HepG2 (cell line): ENCODE measurements at regions of chr22 and their contacts with region 1.

Region 1: DNA sequence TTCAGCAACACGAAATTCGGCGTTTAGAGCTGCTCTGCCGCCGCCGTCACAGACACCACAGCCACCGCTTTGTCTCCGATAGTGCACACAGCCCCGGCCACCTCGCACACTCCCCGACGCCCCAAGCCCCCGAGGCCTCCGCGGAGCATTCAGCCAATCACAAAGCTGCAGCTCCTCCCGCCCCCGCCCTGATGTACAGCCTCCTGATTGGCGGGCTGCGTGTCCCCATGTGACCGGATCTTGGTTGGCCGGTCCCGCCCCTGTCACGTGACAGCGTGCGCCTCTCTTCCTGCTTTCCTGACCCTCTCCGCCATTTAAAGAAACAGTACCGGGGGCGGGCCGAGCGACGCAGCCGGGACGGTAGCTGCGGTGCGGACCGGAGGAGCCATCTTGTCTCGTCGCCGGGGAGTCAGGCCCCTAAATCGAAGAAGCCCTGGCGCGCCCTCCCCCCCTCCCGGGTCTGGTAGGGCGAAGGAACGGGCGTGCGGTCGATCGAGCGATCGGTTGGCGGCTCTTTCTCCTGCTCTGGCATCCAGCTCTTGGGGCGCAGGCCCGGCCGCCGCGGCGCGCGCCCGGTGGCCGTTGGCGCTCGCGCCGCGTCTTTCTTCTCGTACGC is at the start of gene TUG1:
- DNase-seq: peak; percentile 96
- ATAC-seq: peak; percentile 97
- H3K4me3 ChIP-seq: peak within 1 kb of the TSS; percentile 80 to 89 (median 88)
- H3K27ac ChIP-seq: peak within 1 kb of the TSS; percentile 84
- H3K4me1 ChIP-seq: peaks cover 69% of the 10 kb centered on the region
- H3K27me3 ChIP-seq: no peaks in the 10 kb centered on the region; a peak in 1 of 5 replicates
- CTCF ChIP-seq: no peak
- EP300 ChIP-seq: no peak
- POLR2A ChIP-seq: peak; percentile 89
- RAD21 ChIP-seq: peak; percentile 62
- total RNA-seq, gene TUG1: 32.8 and 35.2 TPM in 2 replicates

Region 2: DNA sequence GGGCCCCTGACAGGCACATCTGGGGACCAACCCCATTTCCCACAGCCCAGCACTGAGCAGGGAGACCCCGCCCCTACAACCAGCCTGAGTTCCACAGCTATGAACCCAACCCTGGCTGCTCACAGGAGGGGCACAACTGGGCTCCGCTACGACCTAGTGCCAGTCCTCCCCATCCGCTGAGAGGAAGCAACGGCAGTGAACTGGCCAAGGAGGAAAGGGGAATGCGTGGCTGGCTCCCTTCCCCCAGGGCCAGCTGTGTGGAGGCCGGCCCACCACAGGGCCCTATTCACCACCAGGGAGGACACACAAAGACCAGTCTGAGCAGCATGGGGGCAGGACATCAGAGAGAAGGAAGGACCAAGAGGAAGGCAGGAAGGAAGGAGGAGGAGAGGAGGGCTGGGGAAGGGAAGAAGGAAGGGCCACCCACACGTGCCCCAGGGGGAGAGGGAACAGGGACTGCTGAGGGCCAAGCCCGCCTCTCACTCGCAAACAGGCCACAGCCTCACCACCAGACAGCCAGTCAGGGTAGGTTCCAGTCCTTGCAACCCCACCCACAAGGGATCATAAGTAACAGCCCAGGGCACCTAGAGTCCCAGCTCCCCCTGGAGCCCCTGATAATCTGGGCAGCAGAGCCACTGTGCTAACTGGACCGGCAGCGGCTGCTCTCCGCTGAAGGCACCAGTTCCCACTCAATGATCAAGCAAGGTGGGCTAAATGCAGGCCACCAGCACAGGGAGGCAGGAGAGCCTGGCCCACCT is 386.1 kb before region 1 on chr22:
- CTCF ChIA-PET with region 1: no interaction called
- POLR2A ChIA-PET with region 1: no interaction called
- in situ Hi-C with region 1: no loop called
- intact Hi-C with region 1: no loop called
- DNase-seq: no peak
- ATAC-seq: no peak
- H3K4me3 ChIP-seq: no peak overlapping the region
- H3K27ac ChIP-seq: no peak overlapping the region
- H3K4me1 ChIP-seq: no peaks in the 10 kb centered on the region
- H3K27me3 ChIP-seq: no peaks in the 10 kb centered on the region
- CTCF ChIP-seq: no peak
- EP300 ChIP-seq: no peak
- POLR2A ChIP-seq: no peak
- RAD21 ChIP-seq: no peak

Region 3: GRCh38 chr22:31046539-31047226 is 77.7 kb after region 1 on chr22:
- CTCF ChIA-PET with region 1: no interaction called
- POLR2A ChIA-PET with region 1: interaction called, 18 read pairs
- in situ Hi-C with region 1: no loop called
- intact Hi-C with region 1: no loop called
- DNase-seq: peak; percentile 45
- ATAC-seq: peak; percentile 59; the same call in 2 of the 3 replicates
- H3K4me3 ChIP-seq: 0 out of 6 replicates have a peak overlapping the region, but pooled peaks of 1 of the 3 experiments have one; percentile 7
- H3K27ac ChIP-seq: peak overlapping the region; percentile 56
- H3K4me1 ChIP-seq: peaks cover 51% of the 10 kb centered on the region
- H3K27me3 ChIP-seq: no peaks in the 10 kb centered on the region
- CTCF ChIP-seq: no peak; the same call in 1 of the 2 replicates
- EP300 ChIP-seq: no peak; a peak in 1 of 4 replicates
- POLR2A ChIP-seq: no peak
- RAD21 ChIP-seq: no peak

Region 4: DNA sequence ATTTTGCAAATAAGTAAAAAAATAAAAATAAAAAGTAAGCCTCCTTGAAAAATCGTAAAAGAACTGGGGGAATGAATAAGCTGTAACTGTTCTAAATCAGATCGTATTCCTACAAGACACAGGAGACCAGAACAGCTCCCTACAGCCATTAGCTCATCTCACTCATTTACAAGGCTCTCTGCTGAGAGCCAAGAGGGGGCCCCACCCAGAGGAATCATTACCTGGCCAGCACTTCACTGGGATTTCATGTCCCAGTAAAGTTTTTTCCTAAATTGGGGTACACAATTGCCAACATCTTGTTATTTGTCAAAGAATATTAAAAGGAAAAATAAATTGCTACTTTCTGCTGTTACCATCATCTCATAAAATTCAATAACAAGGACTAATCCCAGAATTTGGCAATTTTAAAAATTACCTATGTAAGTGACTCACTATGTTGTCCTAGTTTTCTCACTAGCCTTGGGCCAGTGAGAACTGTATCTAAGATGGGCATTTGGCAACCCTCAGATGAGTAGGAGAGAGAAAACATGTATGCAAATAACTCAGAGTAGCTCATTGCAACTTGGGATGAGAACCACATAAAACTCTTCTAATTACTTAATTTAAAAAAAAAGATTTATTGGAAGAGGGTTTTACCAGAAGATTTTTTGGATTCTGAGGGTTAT is 93.7 kb after region 1 on chr22:
- CTCF ChIA-PET with region 1: no interaction called
- POLR2A ChIA-PET with region 1: interaction called, 35 read pairs
- in situ Hi-C with region 1: no loop called
- intact Hi-C with region 1: loop called (anchors 5 kb)
- DNase-seq: no peak
- ATAC-seq: no peak
- H3K4me3 ChIP-seq: no peak overlapping the region
- H3K27ac ChIP-seq: no peak overlapping the region
- H3K4me1 ChIP-seq: peaks cover 50% of the 10 kb centered on the region
- H3K27me3 ChIP-seq: no peaks in the 10 kb centered on the region
- CTCF ChIP-seq: no peak
- EP300 ChIP-seq: no peak
- POLR2A ChIP-seq: no peak
- RAD21 ChIP-seq: no peak

Region 5: DNA sequence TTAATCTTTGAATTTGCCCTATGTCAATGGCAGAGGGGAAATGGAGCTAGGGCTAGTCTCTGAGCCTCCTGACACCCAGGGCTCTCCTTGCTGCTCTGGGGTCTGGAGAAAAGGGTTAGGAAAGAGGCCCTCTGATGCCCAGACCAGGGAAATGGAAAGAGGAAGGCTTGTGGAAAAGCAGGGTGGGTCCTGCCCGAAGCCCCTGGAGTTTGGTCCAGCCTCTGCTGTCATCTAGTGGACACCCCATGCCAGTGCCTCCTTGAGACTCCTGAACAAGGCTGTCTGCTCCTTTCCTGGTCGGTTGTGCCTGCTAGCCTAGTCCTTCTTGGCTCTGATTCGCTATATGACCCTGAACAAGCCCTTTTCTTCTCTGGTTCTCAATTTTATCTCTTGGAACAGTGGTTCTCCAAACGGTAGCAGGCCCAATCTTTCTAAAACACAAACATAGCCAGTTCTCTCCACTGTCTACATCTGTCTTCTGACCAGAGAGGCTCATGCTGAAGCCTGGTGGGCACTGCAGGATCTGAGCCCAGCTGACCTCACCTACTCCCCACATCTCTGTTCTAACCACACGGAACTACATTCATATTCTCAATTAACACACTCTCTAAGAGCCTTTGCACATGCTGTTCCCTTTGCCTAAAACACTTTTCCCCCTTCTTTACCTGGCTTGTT is 180.1 kb after region 1 on chr22:
- CTCF ChIA-PET with region 1: no interaction called
- POLR2A ChIA-PET with region 1: interaction called, 3 read pairs
- in situ Hi-C with region 1: loop called (anchors 10 kb)
- intact Hi-C with region 1: no loop called
- DNase-seq: peak; percentile 64
- ATAC-seq: peak; percentile 90
- H3K4me3 ChIP-seq: no peak overlapping the region
- H3K27ac ChIP-seq: no peak overlapping the region
- H3K4me1 ChIP-seq: peaks cover 27% of the 10 kb centered on the region
- H3K27me3 ChIP-seq: peaks cover 2 to 5% of the 10 kb centered on the region in 2 experiments; a peak in 2 of 5 replicates
- CTCF ChIP-seq: peak; percentile 96
- EP300 ChIP-seq: no peak
- POLR2A ChIP-seq: no peak
- RAD21 ChIP-seq: peak; percentile 95

Region 6: GRCh38 chr22:31932863-31933262 is 963.8 kb after region 1 on chr22:
- CTCF ChIA-PET with region 1: no interaction called
- POLR2A ChIA-PET with region 1: no interaction called
- in situ Hi-C with region 1: no loop called
- intact Hi-C with region 1: no loop called
- DNase-seq: peak; percentile 34
- ATAC-seq: peak; percentile 41
- H3K4me3 ChIP-seq: no peak overlapping the region
- H3K27ac ChIP-seq: no peak overlapping the region
- H3K4me1 ChIP-seq: peaks cover 39% of the 10 kb centered on the region
- H3K27me3 ChIP-seq: peaks cover 0 to 16% of the 10 kb centered on the region in 2 experiments; a peak in 3 of 5 replicates
- CTCF ChIP-seq: no peak
- EP300 ChIP-seq: no peak
- POLR2A ChIP-seq: no peak
- RAD21 ChIP-seq: no peak